Heart left ventricle (tissue), 16 donors: ENCODE measurements at regions of chr1 and their contacts with region 1.

Region 1: GRCh38 chr1:145978854-145979759 is 14.6 kb downstream of the POLR3GL start:
- DNase-seq: peak; percentile 89 to 97 (median 96)
- ATAC-seq: peak; percentile 85 to 95 (median 89)
- H3K4me3 ChIP-seq: peak overlapping the region in 11 of 12 donors; percentile 1 to 46 (median 36)
- H3K27ac ChIP-seq: peak overlapping the region; percentile 81 to 98 (median 96)
- H3K4me1 ChIP-seq: peaks cover 23 to 70% (median 63%) of the 10 kb centered on the region in 12 donors
- H3K27me3 ChIP-seq: no peaks in the 10 kb centered on the region
- CTCF ChIP-seq: peak in 8 of 12 donors; percentile 10 to 54 (median 36)
- POLR2A ChIP-seq: peak in 1 of 2 donors; percentile 79

Region 2: DNA sequence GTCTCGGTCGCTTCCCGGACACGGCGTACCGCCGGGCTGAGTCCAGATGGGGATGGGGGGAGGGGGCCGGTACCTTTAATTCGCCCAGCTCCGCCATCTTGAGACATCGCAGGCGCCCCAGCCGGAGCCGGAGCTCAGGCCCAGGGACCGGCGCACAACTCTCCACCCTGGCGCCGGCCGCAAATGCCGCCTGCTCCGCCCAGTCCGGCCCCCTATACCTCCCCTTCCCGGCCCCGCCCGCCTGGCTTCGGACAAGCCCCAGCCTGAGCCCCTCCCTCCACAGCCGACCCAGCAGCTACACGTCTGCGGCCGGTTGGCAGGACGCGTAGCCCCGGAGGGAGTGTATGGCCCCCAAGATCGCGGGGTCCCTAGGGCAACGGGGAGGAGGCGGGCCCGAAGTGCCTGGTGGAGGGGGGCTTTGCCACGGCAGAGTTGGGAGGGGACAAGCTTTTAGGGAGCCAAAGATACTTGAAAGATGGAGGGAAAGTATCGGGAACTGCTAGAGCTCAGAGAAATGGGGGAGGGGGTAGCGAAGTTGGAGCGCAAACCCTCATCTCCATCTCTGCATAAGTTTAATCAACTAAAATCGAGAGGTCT is 120.1 kb before region 1 on chr1 and contains the start of gene PIAS3:
- intact Hi-C with region 1: loop called in 1 of 10 experiments (anchors 5 kb)
- DNase-seq: peak; percentile 96 to 98 (median 98)
- ATAC-seq: peak; percentile 96 to 97 (median 96)
- H3K4me3 ChIP-seq: peak within 1 kb of the TSS; percentile 55 to 97 (median 90)
- H3K27ac ChIP-seq: peak within 1 kb of the TSS; percentile 89 to 95 (median 92)
- H3K4me1 ChIP-seq: peaks cover 0 to 22% (median 13%) of the 10 kb centered on the region in 12 donors
- H3K27me3 ChIP-seq: no peaks in the 10 kb centered on the region
- CTCF ChIP-seq: no peak
- POLR2A ChIP-seq: peak in 1 of 2 donors; percentile 91
- total RNA-seq, gene PIAS3: 14.2 to 25.8 (median 15.6) TPM

Region 3: GRCh38 chr1:145996433-145997015 is 17.4 kb after region 1 on chr1 and contains the start of gene TXNIP:
- intact Hi-C with region 1: loop called in 6 of 10 experiments (anchors 1 to 2 kb)
- DNase-seq: peak; percentile 99 to 100 (median 100)
- ATAC-seq: peak; percentile 85 to 98 (median 90)
- H3K4me3 ChIP-seq: peak within 1 kb of the TSS; percentile 59 to 94 (median 82)
- H3K27ac ChIP-seq: peak within 1 kb of the TSS; percentile 94 to 100 (median 97)
- H3K4me1 ChIP-seq: peaks cover 3 to 71% (median 43%) of the 10 kb centered on the region in 12 donors
- H3K27me3 ChIP-seq: no peaks in the 10 kb centered on the region
- CTCF ChIP-seq: no peak
- POLR2A ChIP-seq: peak; percentile 12 to 97
- total RNA-seq, gene TXNIP: 489 to 1,925 (median 1,000) TPM

Region 4: DNA sequence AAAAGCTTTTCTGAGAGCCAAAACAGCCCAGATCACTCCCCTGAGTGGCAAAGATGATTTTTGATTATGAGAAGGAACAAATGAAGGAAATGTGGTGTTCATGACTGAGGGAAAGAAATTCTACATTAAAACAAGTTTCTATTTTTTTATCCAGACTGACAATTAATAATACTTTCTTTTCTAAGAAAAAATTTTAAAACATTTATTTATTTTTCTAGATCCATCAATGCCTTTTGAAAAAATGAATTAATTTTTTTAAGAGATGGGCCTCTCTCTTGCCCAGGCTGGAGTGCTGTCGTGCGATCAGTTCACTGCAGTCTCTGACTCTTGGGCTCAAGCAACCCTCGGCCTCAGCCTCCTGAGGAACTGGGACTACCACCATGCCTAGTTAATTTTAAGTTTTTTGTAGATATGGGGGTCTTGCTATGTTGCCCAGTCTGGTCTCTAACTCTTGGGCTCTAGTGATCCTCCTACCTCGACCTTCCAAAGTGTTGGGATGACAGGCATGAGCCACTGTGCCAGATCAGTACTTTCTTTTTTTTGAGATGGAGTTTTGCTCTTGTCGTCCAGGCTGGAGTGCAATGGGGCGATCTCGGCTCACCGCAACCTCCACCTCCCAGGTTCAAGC is 28.5 kb after region 1 on chr1:
- intact Hi-C with region 1: loop called (anchors 1 to 2 kb)
- DNase-seq: no peak
- ATAC-seq: peak in 1 of 4 donors; percentile 10
- H3K4me3 ChIP-seq: peak overlapping the region in 5 of 12 donors; percentile 8 to 27 (median 22)
- H3K27ac ChIP-seq: peak overlapping the region; percentile 31 to 94 (median 84)
- H3K4me1 ChIP-seq: peaks cover 2 to 62% (median 15%) of the 10 kb centered on the region in 12 donors
- H3K27me3 ChIP-seq: no peaks in the 10 kb centered on the region
- CTCF ChIP-seq: peak in 1 of 12 donors; percentile 19
- POLR2A ChIP-seq: no peak